Common myeloid progenitor, CD34-positive (primary cell): ENCODE measurements at regions of chr20 and their contacts with region 1.

Region 1: DNA sequence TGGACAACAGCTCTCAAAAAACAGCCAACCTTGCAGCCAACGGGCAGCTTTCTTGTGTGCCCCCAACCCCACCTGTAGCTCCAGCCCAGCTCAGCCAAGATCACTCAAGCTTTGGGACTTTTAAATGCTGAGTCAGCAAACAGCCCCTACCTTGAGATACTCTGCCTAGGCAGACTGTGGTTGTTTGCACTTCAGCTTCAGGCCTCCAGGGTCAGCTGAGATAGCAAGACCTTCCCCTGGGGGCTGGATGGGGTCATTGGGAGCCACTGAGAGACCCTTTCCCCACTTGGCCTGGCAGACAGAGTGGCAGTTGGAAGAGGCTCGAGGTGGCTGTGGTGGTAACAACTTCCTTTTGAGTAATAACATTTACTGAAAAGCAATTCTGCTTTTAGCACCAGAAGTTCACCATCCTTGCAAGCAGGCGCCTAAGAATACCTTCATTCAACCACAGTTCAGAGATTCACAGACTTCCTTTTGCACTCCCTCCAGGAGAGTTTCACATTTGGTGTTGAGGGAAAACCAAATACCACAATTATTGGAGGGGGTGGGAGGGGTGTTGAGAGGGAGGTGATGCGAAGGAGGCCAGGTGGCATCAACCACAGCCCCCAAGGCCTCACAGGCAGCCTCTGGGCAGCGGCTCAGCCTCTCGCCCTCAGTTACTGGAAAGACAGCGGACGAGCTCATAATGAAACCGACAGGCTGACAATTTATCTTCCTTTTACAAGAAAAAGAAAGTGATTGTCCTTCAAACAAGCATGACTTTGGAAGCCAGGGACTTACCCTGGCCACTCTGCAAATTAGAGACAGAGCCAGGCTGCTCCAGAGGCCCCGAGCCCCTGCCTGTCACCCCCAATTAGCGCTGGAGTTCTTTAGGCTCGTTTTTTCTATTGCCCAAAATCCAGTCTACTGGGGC is 148.1 kb downstream of the CEBPB start:
- DNase-seq: peak; percentile 85 to 99 (median 97)
- H3K4me3 ChIP-seq: peak overlapping the region in 4 of 7 experiments; percentile 11 to 57 (median 30)
- H3K27ac ChIP-seq: peak overlapping the region in 1 of 2 experiments; percentile 75
- H3K4me1 ChIP-seq: peaks cover 8 to 53% (median 45%) of the 10 kb centered on the region in 4 experiments
- H3K27me3 ChIP-seq: peaks cover 0 to 5% (median 0%) of the 10 kb centered on the region in 5 experiments

Region 2: GRCh38 chr20:50385733-50386640 is 47.3 kb after region 1 on chr20:
- CTCF ChIA-PET with region 1: interaction called, 4 read pairs
- POLR2A ChIA-PET with region 1: interaction called, 11 read pairs
- DNase-seq: peak; percentile 71 to 95 (median 91)
- H3K4me3 ChIP-seq: peak overlapping the region in 3 of 7 experiments; percentile 29 to 48 (median 37)
- H3K27ac ChIP-seq: no peak overlapping the region
- H3K4me1 ChIP-seq: peaks cover 16 to 80% (median 66%) of the 10 kb centered on the region in 4 experiments
- H3K27me3 ChIP-seq: no peaks in the 10 kb centered on the region